ENCODE measurements at regions of chr20 and their contacts with region 1.

Region 1: GRCh38 chr20:24738981-24739633 is 210.0 kb upstream of the CST7 start:
- DNase-seq: no peak
- ATAC-seq: peak; percentile 80
- H3K4me3 Mint-ChIP-seq: peak overlapping the region; percentile 37
- H3K27ac Mint-ChIP-seq: peak overlapping the region; percentile 81
- H3K4me1 Mint-ChIP-seq: peaks cover 19% of the 10 kb centered on the region
- H3K27me3 Mint-ChIP-seq: no peaks in the 10 kb centered on the region

Region 2: GRCh38 chr20:24406750-24407510 is 332.2 kb before region 1 on chr20:
- CTCF ChIA-PET with region 1: no interaction called
- POLR2A ChIA-PET with region 1: no interaction called
- intact Hi-C with region 1: loop called in 1 of 2 experiments (anchors 10 kb)
- DNase-seq: peak; percentile 19
- ATAC-seq: peak; percentile 86
- H3K4me3 Mint-ChIP-seq: no peak overlapping the region
- H3K27ac Mint-ChIP-seq: peak overlapping the region; percentile 84
- H3K4me1 Mint-ChIP-seq: peaks cover 20% of the 10 kb centered on the region
- H3K27me3 Mint-ChIP-seq: no peaks in the 10 kb centered on the region

Region 3: DNA sequence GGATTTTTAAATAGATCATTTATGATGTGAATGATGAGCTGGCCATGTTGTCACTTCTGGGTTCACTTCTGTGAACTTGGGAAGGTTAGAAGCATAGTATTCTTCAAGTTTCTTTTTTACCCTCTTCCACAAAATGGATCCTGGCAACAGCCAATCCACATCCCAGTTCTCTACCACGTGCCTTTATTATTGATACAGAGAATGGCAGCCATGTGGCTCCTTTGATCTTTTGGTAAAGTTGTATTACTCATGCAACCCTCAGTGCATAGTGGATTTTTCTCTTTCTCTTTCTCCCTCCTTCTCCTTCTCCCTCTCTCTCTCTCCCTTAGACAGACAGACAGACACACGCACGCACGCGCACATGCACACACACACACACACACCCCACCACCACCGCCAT is 219.6 kb before region 1 on chr20:
- CTCF ChIA-PET with region 1: no interaction called
- POLR2A ChIA-PET with region 1: no interaction called
- intact Hi-C with region 1: loop called in 1 of 2 experiments (anchors 1 kb)
- DNase-seq: peak; percentile 24
- ATAC-seq: peak; percentile 82
- H3K4me3 Mint-ChIP-seq: no peak overlapping the region
- H3K27ac Mint-ChIP-seq: no peak overlapping the region
- H3K4me1 Mint-ChIP-seq: peaks cover 6% of the 10 kb centered on the region
- H3K27me3 Mint-ChIP-seq: peaks cover 2% of the 10 kb centered on the region

Region 4: DNA sequence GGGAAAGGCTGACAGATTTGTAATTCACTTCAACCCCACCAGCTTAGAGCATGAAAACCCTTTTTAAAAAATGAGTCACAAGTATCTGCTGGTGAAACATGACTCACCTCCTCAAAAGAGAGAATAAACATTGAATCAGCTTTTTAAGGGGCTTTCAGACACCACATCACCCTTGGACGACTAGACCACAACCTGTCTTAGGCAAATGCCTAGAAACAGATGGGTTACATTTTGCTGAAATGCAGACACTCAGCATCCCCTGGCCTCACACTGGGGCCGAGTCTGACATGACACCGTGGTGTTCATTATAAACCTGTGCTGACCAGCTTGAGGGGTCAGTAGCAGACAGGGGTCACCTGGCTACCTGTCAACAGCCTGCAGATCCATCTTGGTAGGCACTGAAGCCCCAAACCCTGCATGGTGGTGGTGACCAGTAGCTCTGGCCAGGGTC is 34.7 kb after region 1 on chr20:
- CTCF ChIA-PET with region 1: no interaction called
- POLR2A ChIA-PET with region 1: no interaction called
- intact Hi-C with region 1: loop called in 1 of 2 experiments (anchors 2 kb)
- DNase-seq: peak; percentile 53
- ATAC-seq: peak; percentile 94
- H3K4me3 Mint-ChIP-seq: no peak overlapping the region
- H3K27ac Mint-ChIP-seq: no peak overlapping the region
- H3K4me1 Mint-ChIP-seq: peaks cover 9% of the 10 kb centered on the region
- H3K27me3 Mint-ChIP-seq: peaks cover 26% of the 10 kb centered on the region

Region 5: GRCh38 chr20:24934101-24934661 is 195.1 kb after region 1 on chr20:
- CTCF ChIA-PET with region 1: no interaction called
- POLR2A ChIA-PET with region 1: no interaction called
- intact Hi-C with region 1: no loop called
- DNase-seq: no peak
- ATAC-seq: no peak
- H3K4me3 Mint-ChIP-seq: no peak overlapping the region
- H3K27ac Mint-ChIP-seq: no peak overlapping the region
- H3K4me1 Mint-ChIP-seq: peaks cover 15% of the 10 kb centered on the region
- H3K27me3 Mint-ChIP-seq: no peaks in the 10 kb centered on the region